AG04449 (cell line): ENCODE measurements at regions of chr20 and their contacts with region 1.

Region 1: DNA sequence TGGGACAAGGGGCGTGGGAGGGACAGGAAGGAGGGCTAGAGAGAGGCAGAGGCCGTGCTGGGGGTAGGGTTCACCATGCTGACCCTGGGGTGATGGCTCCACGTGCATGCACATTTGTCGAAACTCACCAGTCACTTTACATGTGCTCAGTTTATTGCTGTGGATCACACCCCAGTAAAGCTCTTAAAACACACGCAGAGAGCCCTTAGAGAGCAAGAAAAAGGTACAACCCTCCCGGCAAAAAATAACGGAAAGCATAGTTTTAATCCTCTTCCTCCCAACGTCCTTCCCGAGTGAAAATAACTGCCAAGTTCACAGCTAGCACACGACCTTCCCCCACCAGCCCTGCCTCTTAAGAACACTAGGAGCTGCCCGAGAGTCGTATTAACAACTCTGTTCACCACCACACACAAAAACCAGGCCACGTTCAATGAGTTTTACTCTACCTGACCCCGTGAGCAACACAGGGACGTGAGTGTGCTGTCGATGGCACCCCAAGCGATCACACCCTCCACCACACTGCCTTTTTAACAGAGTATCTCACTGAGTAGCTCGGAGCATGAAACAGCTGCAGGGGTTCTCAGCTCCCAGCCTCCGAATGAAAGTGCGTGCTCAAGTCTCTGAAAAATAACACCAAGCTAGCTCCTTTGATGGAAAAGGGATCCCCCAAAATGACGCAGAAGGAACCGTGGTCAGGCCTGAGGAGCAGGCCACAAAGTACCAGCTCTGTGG is 39.7 kb downstream of the TAF4 start:
- DNase-seq: peak; percentile 26
- H3K4me3 ChIP-seq: no peak overlapping the region
- CTCF ChIP-seq: peak; percentile 78

Region 2: DNA sequence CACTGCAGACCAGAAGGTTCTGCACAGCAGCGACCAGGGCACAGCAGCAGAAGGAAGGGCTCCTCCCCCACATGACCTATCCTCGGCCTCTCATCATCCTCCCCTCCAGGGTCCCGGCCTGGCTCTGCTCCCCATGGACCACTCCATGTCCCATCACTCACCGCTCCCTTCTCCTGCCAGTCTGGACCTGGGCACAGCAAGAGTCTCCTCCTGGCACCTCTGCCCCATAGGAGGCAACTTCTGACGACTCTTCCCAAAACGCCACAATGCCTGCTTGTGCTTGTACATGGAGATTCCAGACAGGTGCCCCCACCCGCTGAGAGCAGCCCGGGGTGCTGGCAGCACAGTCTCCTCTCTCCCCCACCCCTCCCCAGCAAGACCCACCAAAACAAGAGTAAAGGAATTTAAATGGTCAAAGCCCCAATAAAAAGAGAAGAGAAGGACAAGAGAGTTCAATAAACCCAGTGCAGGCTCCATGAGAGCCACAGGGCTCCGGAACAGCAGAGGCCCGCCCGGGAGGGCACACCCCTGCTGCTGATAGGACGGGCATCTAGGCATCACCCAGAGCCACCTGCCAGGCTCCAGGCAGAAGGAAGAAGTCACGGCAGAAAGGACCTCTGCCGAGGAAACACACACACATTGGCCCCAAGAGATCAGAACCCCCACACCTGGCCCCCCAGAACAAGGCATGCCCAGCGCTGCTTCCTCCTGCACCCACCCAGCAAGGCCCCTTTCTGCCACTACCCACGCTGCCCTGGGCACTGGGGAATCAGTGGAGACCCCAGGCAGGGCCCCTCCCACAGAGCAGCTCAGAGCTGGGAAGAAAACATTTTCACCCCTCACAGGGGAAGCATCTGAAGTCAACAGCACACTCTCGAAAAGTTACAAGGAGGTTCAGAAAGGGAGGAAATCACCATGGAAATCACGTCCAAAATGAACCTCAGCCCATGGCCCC is 24.4 kb after region 1 on chr20:
- CTCF ChIA-PET with region 1: no interaction called
- POLR2A ChIA-PET with region 1: no interaction called
- DNase-seq: no peak
- H3K4me3 ChIP-seq: no peak overlapping the region
- CTCF ChIP-seq: no peak

Region 3: GRCh38 chr20:62136283-62137091 is 110.5 kb after region 1 on chr20:
- CTCF ChIA-PET with region 1: interaction called, 35 read pairs
- POLR2A ChIA-PET with region 1: no interaction called
- DNase-seq: no peak
- H3K4me3 ChIP-seq: no peak overlapping the region
- CTCF ChIP-seq: peak; percentile 81

Region 4: DNA sequence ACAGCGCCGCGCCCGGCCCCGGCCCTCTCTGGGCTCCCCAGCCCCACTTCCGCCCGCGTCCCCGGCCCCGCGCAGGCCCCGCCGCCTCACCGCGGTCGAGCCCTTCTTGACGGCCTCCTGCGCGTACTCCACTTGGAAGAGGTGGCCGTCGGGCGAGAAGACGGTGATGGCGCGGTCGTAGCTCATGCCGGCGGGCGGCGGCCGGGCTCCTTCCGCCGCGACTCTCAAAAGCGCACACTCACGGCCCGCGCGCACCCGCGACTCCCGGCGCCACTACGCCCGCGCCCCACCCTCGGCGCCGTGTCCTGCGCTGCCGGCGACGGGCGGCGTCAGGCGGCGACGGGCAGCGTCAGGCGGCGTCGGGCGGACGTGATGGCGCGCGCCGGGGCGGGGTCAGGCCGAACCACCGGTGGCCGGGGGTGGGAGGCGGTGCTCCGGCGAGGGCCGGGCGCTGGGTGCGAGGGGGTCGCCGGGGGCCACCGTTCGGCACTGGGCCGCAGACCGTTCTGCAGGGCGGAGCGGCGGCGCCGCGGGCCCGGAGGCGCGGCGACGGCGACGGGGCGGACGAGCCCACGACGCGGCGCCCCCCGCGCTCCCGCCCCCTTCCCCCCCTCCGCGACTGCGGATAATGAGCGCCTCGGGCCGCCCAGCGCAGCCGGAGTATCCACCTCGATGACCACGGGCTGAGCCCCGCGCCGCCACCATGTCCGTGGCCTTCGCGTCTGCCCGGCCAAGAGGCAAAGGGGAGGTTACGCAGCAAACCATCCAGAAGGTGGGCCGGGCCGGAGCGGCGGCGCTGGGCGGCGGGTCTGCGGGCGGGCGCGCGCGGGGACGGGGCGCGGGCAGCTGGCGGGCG is 117.3 kb after region 1 on chr20 and contains the starts of genes PSMA7 and SS18L1:
- CTCF ChIA-PET with region 1: interaction called, 35 read pairs
- POLR2A ChIA-PET with region 1: no interaction called
- DNase-seq: no peak
- H3K4me3 ChIP-seq: peak within 1 kb of the TSS; percentile 76
- CTCF ChIP-seq: no peak

Region 5: GRCh38 chr20:62156592-62157386 is 130.8 kb after region 1 on chr20:
- CTCF ChIA-PET with region 1: interaction called, 11 read pairs
- POLR2A ChIA-PET with region 1: no interaction called
- DNase-seq: no peak
- H3K4me3 ChIP-seq: no peak overlapping the region
- CTCF ChIP-seq: peak; percentile 85

Region 6: GRCh38 chr20:62427172-62428001 is 401.4 kb after region 1 on chr20 and contains the start of gene RBBP8NL:
- CTCF ChIA-PET with region 1: no interaction called
- POLR2A ChIA-PET with region 1: no interaction called
- DNase-seq: no peak
- H3K4me3 ChIP-seq: no peak within 1 kb of the TSS
- CTCF ChIP-seq: no peak